Dendritic cell treated with granulocyte-macrophage colony-stimulating factor and Interleukin-4, amounts not matched to agents 40 ng/mL and 50 ng/mL, for 4 days (primary cell): ENCODE measurements at regions of chr11 and their contacts with region 1.

Region 1: DNA sequence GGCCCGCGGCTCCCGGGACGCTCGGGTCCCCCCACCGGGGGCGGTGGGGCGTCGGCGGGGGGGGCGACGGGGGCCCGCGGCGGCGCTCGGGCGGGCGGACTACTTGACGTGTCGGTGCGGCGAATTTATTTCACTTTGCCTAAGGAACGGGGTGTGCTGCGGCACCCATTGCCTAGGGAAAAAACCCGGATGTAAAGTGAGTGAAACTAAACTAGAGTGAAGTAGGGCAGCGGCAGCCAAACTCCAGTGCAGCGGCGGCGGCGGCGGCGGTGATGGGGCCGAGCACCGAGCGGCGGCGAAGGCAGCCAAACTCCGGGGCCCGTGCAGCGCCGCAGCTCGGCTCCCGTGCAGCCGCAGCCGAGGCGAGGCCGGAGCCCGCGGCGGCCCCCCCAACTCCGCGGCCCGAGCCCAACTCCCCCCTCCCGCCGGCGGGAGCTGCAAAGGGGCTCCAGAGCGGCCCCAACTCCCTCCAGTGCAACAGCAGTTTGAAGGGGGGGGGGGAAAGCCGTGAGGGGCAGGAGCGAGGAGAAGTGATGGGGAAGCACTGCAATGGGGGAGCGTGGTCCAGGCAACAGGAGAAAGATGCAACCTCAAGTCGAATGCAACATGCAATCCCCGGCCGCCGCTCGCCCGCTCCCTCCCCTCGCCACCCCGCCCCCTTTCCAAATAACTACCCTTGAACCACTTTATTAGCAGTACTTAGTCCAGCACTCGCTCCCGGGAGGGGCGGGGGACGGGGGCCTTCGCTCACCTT is 647 bp upstream of the PHF21A start:
- H3K4me3 Mint-ChIP-seq: peak overlapping the region; percentile 83
- H3K27ac Mint-ChIP-seq: peak overlapping the region; percentile 96
- H3K4me1 Mint-ChIP-seq: peaks cover 30% of the 10 kb centered on the region
- H3K27me3 Mint-ChIP-seq: no peaks in the 10 kb centered on the region

Region 2: DNA sequence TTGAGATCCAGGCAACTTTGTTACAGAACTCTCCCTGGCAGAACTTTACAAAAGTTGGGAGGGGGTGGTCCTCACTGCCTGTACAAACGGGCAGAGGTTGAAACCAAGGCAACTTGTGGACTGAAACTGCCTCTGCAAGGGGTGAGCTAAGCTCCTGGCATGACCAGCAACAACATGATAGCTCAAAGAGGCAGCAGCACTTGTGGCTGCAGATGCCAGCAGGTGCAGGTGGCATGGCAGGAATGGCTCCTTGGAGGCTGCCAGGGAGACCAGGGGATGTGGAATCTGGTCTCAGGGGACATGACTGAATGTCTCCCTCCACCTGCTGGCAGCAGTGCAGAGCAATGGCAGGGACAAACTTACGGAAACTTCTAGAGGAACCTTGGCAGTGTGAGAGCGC is 38.2 kb after region 1 on chr11:
- intact Hi-C with region 1: no loop called
- H3K4me3 Mint-ChIP-seq: no peak overlapping the region
- H3K27ac Mint-ChIP-seq: no peak overlapping the region
- H3K4me1 Mint-ChIP-seq: no peaks in the 10 kb centered on the region
- H3K27me3 Mint-ChIP-seq: peaks cover 25% of the 10 kb centered on the region

Region 3: DNA sequence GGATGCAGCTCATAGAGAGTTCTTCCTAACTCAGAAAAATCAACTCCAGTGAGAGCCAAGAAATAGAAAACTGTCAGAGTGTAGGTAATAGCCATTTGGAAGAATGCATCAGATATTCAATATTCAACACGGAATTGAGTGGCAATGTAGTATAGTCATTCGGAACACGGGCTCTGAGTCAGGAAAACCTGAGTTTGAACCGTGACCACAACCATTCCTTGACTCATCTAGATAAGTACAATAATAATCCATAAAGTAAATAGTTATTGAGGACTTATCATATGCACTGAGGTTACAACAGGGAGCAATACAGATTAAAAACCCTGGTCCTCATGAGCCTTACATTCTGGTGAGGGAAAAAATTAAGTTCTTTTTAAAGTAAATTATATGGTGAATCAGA is 61.9 kb after region 1 on chr11:
- intact Hi-C with region 1: no loop called
- H3K4me3 Mint-ChIP-seq: no peak overlapping the region
- H3K27ac Mint-ChIP-seq: no peak overlapping the region
- H3K4me1 Mint-ChIP-seq: no peaks in the 10 kb centered on the region
- H3K27me3 Mint-ChIP-seq: peaks cover 10% of the 10 kb centered on the region

Region 4: DNA sequence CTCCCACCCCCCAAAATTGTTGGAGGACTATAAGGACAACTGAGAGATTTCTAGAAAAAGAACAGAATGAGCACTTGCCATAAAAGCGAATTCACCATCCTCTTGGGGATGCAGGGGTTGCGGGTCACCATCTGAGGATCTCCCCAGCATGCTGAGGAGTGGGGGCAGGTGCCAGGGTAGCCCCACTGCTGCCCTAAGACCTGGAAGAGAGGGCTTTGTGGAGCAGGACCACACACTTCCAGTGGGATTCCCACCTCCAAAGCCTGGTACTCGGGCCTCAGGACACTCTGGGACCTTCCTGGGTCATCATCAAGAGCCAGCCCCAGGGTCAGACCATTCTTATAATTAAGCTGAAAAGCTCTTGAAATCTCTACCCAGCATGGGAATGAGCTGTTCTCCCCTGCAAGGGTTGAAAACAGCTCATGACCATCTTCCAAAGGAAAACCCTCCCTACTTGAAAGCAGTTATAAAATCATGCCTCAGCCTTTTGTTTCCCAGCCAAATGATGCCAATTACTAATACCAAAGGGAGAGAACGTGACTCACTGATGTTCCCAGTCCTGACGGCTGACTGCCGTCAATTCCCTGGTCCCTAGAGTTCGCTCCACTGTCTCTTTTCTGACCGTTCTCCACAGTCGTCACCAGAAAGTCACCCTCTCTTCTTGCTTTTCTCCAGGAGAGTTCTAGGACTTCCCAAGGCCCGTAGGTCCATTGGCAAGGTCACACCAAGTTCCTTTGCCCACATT is 78.8 kb after region 1 on chr11:
- intact Hi-C with region 1: no loop called
- H3K4me3 Mint-ChIP-seq: no peak overlapping the region
- H3K27ac Mint-ChIP-seq: no peak overlapping the region
- H3K4me1 Mint-ChIP-seq: no peaks in the 10 kb centered on the region
- H3K27me3 Mint-ChIP-seq: peaks cover 34% of the 10 kb centered on the region

Region 5: GRCh38 chr11:46315033-46315738 is 193.3 kb after region 1 on chr11:
- intact Hi-C with region 1: loop called (anchors 10 kb)
- H3K4me3 Mint-ChIP-seq: no peak overlapping the region
- H3K27ac Mint-ChIP-seq: peak overlapping the region; percentile 23
- H3K4me1 Mint-ChIP-seq: peaks cover 44% of the 10 kb centered on the region
- H3K27me3 Mint-ChIP-seq: no peaks in the 10 kb centered on the region